Activated CD8-positive, alpha-beta memory T cell treated with anti-CD3 and anti-CD28 coated beads, Interleukin-2, amount 10 ng/mL, durations not matched to agents 7 days and 5 days (primary cell): ENCODE measurements at regions of chr19 and their contacts with region 1.

Region 1: GRCh38 chr19:47013041-47013517 is 6.6 kb upstream of the NPAS1 start:
- DNase-seq: peak; percentile 69
- ATAC-seq: peak; percentile 76
- H3K4me3 Mint-ChIP-seq: no peak overlapping the region
- H3K27ac Mint-ChIP-seq: no peak overlapping the region
- H3K4me1 Mint-ChIP-seq: peaks cover 8% of the 10 kb centered on the region
- H3K27me3 Mint-ChIP-seq: peaks cover 16% of the 10 kb centered on the region

Region 2: DNA sequence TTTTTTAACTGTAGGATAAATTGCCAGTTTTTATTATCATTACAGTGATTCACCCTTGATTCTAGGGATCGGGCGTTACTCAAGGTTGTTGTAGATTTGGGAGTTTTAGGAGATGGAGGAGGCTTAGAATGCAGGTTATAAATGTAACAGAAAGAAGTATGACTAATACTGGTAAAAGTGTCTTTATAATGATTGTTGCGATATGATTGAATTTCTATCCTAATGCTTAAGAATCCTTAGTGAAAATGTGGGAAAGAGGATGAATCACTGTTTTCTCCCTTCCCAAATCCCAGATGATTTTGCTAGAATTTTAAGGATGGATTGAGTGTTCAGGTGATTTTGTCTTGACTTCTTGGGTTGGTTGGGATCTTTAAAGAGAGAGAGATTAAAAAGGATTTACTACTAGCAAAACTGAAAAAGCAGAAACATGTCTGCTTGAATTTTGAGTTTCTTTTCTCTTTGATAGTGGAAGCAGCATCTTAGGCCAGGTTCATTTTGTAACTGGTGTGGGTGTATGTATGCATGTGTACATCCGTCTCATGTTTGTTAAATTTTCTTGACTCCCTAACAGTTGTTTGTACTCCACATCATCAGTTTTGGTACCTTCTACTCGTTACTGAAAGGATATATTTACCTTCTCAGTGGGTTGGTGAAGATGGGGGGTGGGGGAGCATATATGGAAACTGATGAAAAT is 126.4 kb before region 1 on chr19:
- CTCF ChIA-PET with region 1: interaction called, 10 read pairs
- DNase-seq: no peak
- ATAC-seq: no peak
- H3K4me3 Mint-ChIP-seq: no peak overlapping the region
- H3K27ac Mint-ChIP-seq: no peak overlapping the region
- H3K4me1 Mint-ChIP-seq: peaks cover 15% of the 10 kb centered on the region
- H3K27me3 Mint-ChIP-seq: no peaks in the 10 kb centered on the region

Region 3: GRCh38 chr19:47002107-47002766 is 10.8 kb before region 1 on chr19:
- CTCF ChIA-PET with region 1: interaction called, 39 read pairs
- DNase-seq: no peak
- ATAC-seq: no peak
- H3K4me3 Mint-ChIP-seq: no peak overlapping the region
- H3K27ac Mint-ChIP-seq: no peak overlapping the region
- H3K4me1 Mint-ChIP-seq: peaks cover 2% of the 10 kb centered on the region
- H3K27me3 Mint-ChIP-seq: peaks cover 12% of the 10 kb centered on the region

Region 4: GRCh38 chr19:47047763-47048405 is 34.8 kb after region 1 on chr19:
- CTCF ChIA-PET with region 1: interaction called, 16 read pairs
- DNase-seq: peak; percentile 93
- ATAC-seq: peak; percentile 67
- H3K4me3 Mint-ChIP-seq: peak overlapping the region; percentile 99
- H3K27ac Mint-ChIP-seq: peak overlapping the region; percentile 98
- H3K4me1 Mint-ChIP-seq: peaks cover 14% of the 10 kb centered on the region
- H3K27me3 Mint-ChIP-seq: no peaks in the 10 kb centered on the region

Region 5: GRCh38 chr19:47124937-47125668 is 112.0 kb after region 1 on chr19:
- CTCF ChIA-PET with region 1: interaction called, 21 read pairs
- DNase-seq: no peak
- ATAC-seq: peak; percentile 63
- H3K4me3 Mint-ChIP-seq: no peak overlapping the region
- H3K27ac Mint-ChIP-seq: peak overlapping the region; percentile 47
- H3K4me1 Mint-ChIP-seq: peaks cover 4% of the 10 kb centered on the region
- H3K27me3 Mint-ChIP-seq: no peaks in the 10 kb centered on the region

Region 6: GRCh38 chr19:47168065-47168464 is 155.0 kb after region 1 on chr19:
- CTCF ChIA-PET with region 1: no interaction called
- DNase-seq: no peak
- ATAC-seq: no peak
- H3K4me3 Mint-ChIP-seq: no peak overlapping the region
- H3K27ac Mint-ChIP-seq: no peak overlapping the region
- H3K4me1 Mint-ChIP-seq: peaks cover 6% of the 10 kb centered on the region
- H3K27me3 Mint-ChIP-seq: no peaks in the 10 kb centered on the region

Region 7: GRCh38 chr19:47210689-47211316 is 197.7 kb after region 1 on chr19:
- CTCF ChIA-PET with region 1: interaction called, 10 read pairs
- DNase-seq: peak; percentile 90
- ATAC-seq: peak; percentile 85
- H3K4me3 Mint-ChIP-seq: no peak overlapping the region
- H3K27ac Mint-ChIP-seq: peak overlapping the region; percentile 92
- H3K4me1 Mint-ChIP-seq: peaks cover 11% of the 10 kb centered on the region
- H3K27me3 Mint-ChIP-seq: no peaks in the 10 kb centered on the region